PC-9 (cell line): ENCODE measurements at regions of chrX and their contacts with region 1.

Region 1: DNA sequence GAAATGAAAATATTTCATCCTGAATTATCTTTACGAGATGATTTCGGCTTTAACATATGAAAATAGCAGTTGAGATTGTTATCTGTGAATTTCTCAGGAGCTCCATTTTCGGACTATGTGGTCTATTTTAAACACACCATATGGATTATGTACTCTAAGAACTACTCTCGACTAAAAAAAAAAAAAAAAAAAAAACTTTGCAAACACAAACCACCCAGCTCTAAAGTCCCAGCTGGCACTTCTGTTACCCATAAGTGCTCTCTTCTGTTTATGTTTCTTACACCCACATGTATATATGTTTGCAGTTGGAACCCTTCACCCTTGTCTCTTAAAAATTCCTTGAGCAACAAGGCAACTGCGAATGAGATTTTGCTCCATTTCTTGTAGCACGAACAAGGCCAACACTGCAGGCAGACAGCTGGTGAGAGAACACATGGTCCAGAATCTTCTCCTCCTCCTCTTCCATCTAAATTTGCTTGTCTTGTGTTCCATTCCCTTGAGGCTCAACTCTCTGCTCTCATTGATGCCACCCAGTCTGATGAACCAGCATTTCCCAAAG is 172.7 kb upstream of the HCCS start:
- DNase-seq: no peak
- H3K4me3 ChIP-seq: no peak overlapping the region
- H3K27ac ChIP-seq: no peak overlapping the region
- H3K4me1 ChIP-seq: no peaks in the 10 kb centered on the region
- H3K27me3 ChIP-seq: no peaks in the 10 kb centered on the region
- CTCF ChIP-seq: no peak

Region 2: DNA sequence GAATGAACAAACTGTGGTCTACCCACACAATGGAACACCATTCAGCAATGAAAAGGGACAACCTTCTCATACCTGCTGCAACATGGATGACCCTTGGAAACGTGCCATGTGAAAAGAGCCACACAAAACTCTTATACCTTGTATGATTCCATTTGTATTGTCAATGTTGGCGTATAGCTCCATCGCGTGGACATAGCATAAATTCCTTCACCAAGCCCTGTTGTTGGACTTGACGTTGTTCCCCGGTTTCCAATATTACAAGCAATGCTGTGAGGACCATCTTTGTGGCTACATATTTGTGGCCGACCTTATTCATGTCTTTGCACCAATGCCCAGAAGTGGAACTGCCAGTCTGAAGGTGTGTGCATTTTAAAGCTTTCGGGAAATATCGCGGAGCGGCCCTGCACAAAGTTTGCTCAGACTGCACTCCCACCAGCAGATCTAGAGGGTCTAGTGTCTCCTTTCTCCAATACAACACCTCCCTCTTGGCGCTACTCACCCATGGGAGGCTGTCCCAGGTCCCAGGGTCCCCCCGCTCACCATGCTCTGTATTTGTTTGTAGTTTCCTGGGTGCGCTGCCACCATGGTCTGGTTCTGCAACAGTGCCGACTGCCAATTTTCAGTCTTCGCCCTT is 971.6 kb before region 1 on chrX and contains the start of gene CLDN34:
- CTCF ChIA-PET with region 1: interaction called, 11 read pairs
- POLR2A ChIA-PET with region 1: no interaction called
- intact Hi-C with region 1: no loop called
- DNase-seq: no peak
- H3K4me3 ChIP-seq: no peak within 1 kb of the TSS
- H3K27ac ChIP-seq: no peak within 1 kb of the TSS
- H3K4me1 ChIP-seq: no peaks in the 10 kb centered on the region
- H3K27me3 ChIP-seq: no peaks in the 10 kb centered on the region
- CTCF ChIP-seq: peak; percentile 26; the same call in 1 of the 2 replicates
- total RNA-seq, gene CLDN34: not detected in 2 replicates